Esophagus muscularis mucosa (tissue), 4 donors: ENCODE measurements at regions of chr3 and their contacts with region 1.

Region 1: GRCh38 chr3:148861277-148861869 is 3.7 kb upstream of the CPA3 start:
- DNase-seq: no peak
- H3K4me3 ChIP-seq: no peak overlapping the region
- H3K27ac ChIP-seq: no peak overlapping the region
- H3K4me1 ChIP-seq: no peaks in the 10 kb centered on the region
- H3K27me3 ChIP-seq: peaks cover 0 to 4% (median 0%) of the 10 kb centered on the region in 4 donors
- CTCF ChIP-seq: peak; percentile 59 to 77 (median 75)
- EP300 ChIP-seq: no peak
- POLR2A ChIP-seq: no peak

Region 2: DNA sequence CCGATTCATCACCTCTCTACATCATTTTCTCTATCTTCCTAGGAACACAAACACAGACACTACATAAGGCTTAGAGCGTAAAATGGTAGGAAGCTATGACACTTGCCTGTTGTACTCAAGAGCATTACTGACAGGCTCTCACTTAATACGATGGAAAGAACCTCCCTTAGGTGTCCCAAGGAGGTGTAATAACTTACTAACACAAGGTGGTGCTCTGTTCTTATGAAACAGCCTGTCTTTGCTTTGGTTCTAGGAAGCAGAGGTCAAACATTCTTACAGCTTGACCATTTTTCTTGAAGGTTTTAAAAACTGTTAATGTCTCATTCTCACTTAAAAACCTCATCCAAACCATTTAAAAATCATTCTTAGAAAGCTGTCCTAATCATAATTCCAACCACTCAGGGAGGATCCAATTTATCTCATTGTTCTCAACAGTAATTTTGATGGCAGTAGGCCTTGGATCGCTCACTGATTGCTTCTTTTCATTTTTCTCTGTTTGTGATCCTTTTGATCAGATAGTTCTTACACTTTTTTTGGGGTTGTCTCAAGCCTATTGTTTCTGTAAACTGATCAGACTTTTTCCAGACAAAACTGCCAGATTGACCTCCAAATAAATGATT is 481.5 kb before region 1 on chr3:
- intact Hi-C with region 1: loop called (anchors 10 kb)
- DNase-seq: no peak
- H3K4me3 ChIP-seq: no peak overlapping the region
- H3K27ac ChIP-seq: no peak overlapping the region
- H3K4me1 ChIP-seq: no peaks in the 10 kb centered on the region
- H3K27me3 ChIP-seq: no peaks in the 10 kb centered on the region
- CTCF ChIP-seq: peak; percentile 50 to 63 (median 62)
- EP300 ChIP-seq: no peak
- POLR2A ChIP-seq: no peak

Region 3: GRCh38 chr3:149273096-149273751 is 411.9 kb after region 1 on chr3:
- intact Hi-C with region 1: loop called (anchors 5 kb)
- DNase-seq: no peak
- H3K4me3 ChIP-seq: no peak overlapping the region
- H3K27ac ChIP-seq: no peak overlapping the region
- H3K4me1 ChIP-seq: peaks cover 0 to 15% (median 11%) of the 10 kb centered on the region in 4 donors
- H3K27me3 ChIP-seq: no peaks in the 10 kb centered on the region
- CTCF ChIP-seq: peak; percentile 92 to 97 (median 95)
- EP300 ChIP-seq: no peak
- POLR2A ChIP-seq: no peak